Common myeloid progenitor, CD34-positive (primary cell): ENCODE measurements at regions of chr1 and their contacts with region 1.

Region 1: GRCh38 chr1:32247983-32248889 is 1.2 kb downstream of the FAM167B start:
- DNase-seq: peak; percentile 58 to 67 (median 64)
- H3K4me3 ChIP-seq: peak overlapping the region in 3 of 7 experiments; percentile 50 to 54 (median 50)
- H3K27ac ChIP-seq: no peak overlapping the region
- H3K4me1 ChIP-seq: peaks cover 11 to 64% (median 59%) of the 10 kb centered on the region in 4 experiments
- H3K27me3 ChIP-seq: no peaks in the 10 kb centered on the region

Region 2: GRCh38 chr1:32221980-32222755 is 26.1 kb before region 1 on chr1 and contains the starts of genes EIF3I and TMEM234:
- CTCF ChIA-PET with region 1: interaction called, 50 read pairs
- POLR2A ChIA-PET with region 1: no interaction called
- DNase-seq: peak; percentile 96 to 97 (median 97)
- H3K4me3 ChIP-seq: peak within 1 kb of the TSS; percentile 65 to 97 (median 85)
- H3K27ac ChIP-seq: peak within 1 kb of the TSS; percentile 99 to 100
- H3K4me1 ChIP-seq: peaks cover 3 to 29% (median 22%) of the 10 kb centered on the region in 4 experiments
- H3K27me3 ChIP-seq: no peaks in the 10 kb centered on the region

Region 3: GRCh38 chr1:32228771-32229170 is 19.5 kb before region 1 on chr1:
- CTCF ChIA-PET with region 1: interaction called, 12 read pairs
- POLR2A ChIA-PET with region 1: no interaction called
- DNase-seq: no peak
- H3K4me3 ChIP-seq: no peak overlapping the region
- H3K27ac ChIP-seq: no peak overlapping the region
- H3K4me1 ChIP-seq: peaks cover 0 to 4% (median under 1%) of the 10 kb centered on the region in 4 experiments
- H3K27me3 ChIP-seq: no peaks in the 10 kb centered on the region

Region 4: GRCh38 chr1:32275424-32275823 is 27.2 kb after region 1 on chr1:
- CTCF ChIA-PET with region 1: interaction called, 10 read pairs
- POLR2A ChIA-PET with region 1: interaction called, 3 read pairs
- DNase-seq: peak; percentile 49 to 68 (median 57)
- H3K4me3 ChIP-seq: peak overlapping the region in 3 of 7 experiments; percentile 28 to 57 (median 36)
- H3K27ac ChIP-seq: no peak overlapping the region
- H3K4me1 ChIP-seq: peaks cover 4 to 28% (median 14%) of the 10 kb centered on the region in 4 experiments
- H3K27me3 ChIP-seq: peaks cover 0 to 8% (median 0%) of the 10 kb centered on the region in 5 experiments

Region 5: GRCh38 chr1:32286763-32287162 is 38.5 kb after region 1 on chr1:
- CTCF ChIA-PET with region 1: interaction called, 27 read pairs
- POLR2A ChIA-PET with region 1: interaction called, 3 read pairs
- DNase-seq: no peak
- H3K4me3 ChIP-seq: no peak overlapping the region
- H3K27ac ChIP-seq: no peak overlapping the region
- H3K4me1 ChIP-seq: peaks cover 0 to 7% (median 5%) of the 10 kb centered on the region in 4 experiments
- H3K27me3 ChIP-seq: no peaks in the 10 kb centered on the region

Region 6: GRCh38 chr1:32291708-32292492 is 43.7 kb after region 1 on chr1 and contains the start of gene HDAC1:
- CTCF ChIA-PET with region 1: interaction called, 27 read pairs
- POLR2A ChIA-PET with region 1: interaction called, 3 read pairs
- DNase-seq: peak; percentile 98 to 99 (median 99)
- H3K4me3 ChIP-seq: peak within 1 kb of the TSS; percentile 91 to 99 (median 95)
- H3K27ac ChIP-seq: peak within 1 kb of the TSS; percentile 54 to 89
- H3K4me1 ChIP-seq: peaks cover 0 to 17% (median 12%) of the 10 kb centered on the region in 4 experiments
- H3K27me3 ChIP-seq: no peaks in the 10 kb centered on the region